ENCODE measurements at regions of chr20 and their contacts with region 1.

Region 1: DNA sequence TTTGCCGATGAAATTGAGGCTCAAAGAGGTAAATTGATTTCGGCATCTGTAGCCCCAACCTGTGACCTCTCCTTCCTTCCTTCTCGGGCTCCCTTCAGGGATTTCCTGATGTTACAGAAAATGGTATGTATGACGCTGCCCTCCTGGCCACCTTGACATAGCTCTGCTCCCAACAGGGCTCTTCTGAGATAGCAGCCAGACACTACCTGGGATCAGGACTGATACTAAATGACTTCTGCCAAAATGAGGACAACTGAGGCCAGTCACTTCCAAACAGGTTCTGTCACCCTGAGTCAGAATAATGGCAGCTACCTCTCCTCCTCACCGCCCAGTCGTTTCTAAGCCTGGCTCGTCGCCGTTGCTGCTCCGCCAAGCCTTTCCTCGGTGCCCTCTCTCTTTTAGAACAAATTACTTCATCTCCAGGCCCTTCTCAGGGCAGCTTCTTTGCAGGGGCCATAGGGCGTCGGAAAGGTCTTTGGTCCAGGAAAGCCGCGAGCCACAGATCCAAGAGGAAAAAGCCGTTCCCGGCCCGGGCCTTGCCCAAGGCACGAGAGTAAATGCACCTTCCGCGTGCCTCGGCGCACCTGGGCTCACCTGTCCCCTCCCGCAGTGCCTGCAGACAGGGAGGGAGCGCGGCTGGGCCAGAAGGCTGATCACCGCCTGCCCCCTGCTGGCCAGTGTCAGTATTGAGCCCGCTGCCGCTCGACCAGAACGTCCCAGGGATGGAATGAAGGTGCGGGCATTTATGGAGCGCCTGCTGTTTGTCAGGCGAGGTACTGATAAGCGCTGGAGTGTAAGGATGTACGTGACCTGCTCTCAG is 904 bp upstream of the LPIN3 start:
- DNase-seq: peak; percentile 77
- ATAC-seq: peak; percentile 79 to 88
- H3K4me3 ChIP-seq: peak overlapping the region; percentile 66
- H3K27ac ChIP-seq: peak overlapping the region; percentile 45 to 94; a peak in 5 of 6 replicates
- H3K4me1 ChIP-seq: peaks cover 11% of the 10 kb centered on the region; the same call in 2 of the 3 replicates
- CTCF ChIP-seq: peak; percentile 95
- EP300 ChIP-seq: no peak
- POLR2A ChIP-seq: no peak
- RAD21 ChIP-seq: peak; percentile 97 to 99

Region 2: DNA sequence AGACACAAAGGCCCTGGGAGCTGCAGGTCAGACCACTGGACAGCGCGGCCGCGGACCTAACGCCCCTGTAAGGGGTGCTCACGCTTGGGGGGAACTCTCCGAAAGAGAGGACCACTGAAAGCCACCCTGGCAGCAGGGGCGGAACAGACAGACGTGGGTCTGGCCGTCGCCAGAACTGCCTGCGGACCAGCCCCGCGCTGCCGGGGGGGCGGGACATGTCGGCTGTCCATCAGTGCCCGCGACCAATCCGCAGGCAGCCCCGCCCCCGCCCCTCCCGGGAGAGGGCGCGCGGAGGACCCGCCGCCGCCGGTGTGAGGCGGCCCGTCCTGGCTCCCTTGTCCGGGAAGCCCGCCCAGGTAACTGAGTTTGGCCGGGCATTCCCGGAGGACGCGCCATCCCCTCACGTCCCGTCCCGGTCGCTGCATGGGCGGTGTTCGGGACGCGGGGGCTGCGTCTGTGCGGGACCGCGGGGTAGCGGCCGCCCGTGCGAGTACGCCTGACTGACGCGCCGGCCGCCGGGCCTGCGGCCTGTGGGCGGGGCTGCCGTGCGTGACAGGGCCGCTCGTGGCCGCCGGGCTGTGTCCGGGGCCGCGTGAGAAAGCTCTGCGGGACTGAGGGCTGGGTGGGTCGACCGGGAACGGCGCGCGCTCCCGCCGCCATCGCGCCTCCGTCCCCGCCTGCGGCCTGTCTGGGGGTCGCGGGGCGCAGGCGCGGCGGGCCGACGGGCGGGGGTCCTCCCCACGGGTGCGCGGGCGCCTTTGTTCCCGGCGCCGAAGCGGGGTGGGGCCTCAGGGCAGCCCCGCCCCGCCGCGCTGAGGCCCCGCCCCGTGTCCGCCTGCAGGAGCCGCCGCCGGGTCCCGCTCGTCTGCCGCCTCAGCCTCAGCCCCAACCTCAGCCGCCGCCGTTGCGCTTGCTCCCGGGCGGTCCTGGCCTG is 202.8 kb before region 1 on chr20 and contains the start of gene PLCG1:
- CTCF ChIA-PET with region 1: interaction called, 103 read pairs
- POLR2A ChIA-PET with region 1: no interaction called
- DNase-seq: peak; percentile 83 to 91
- ATAC-seq: peak; percentile 77 to 86
- H3K4me3 ChIP-seq: peak within 1 kb of the TSS; percentile 89
- H3K27ac ChIP-seq: peak within 1 kb of the TSS; percentile 86 to 91
- H3K4me1 ChIP-seq: peaks cover 7% of the 10 kb centered on the region
- CTCF ChIP-seq: no peak
- EP300 ChIP-seq: no peak
- POLR2A ChIP-seq: peak; percentile 57
- RAD21 ChIP-seq: no peak
- polyA plus RNA-seq, gene PLCG1: 22.0 and 37.1 TPM in 2 replicates

Region 3: GRCh38 chr20:41185013-41185757 is 154.5 kb before region 1 on chr20:
- CTCF ChIA-PET with region 1: interaction called, 10 read pairs
- POLR2A ChIA-PET with region 1: no interaction called
- DNase-seq: no peak
- ATAC-seq: no peak; a peak in 1 of 6 replicates
- H3K4me3 ChIP-seq: no peak overlapping the region
- H3K27ac ChIP-seq: no peak overlapping the region
- H3K4me1 ChIP-seq: no peaks in the 10 kb centered on the region
- CTCF ChIP-seq: no peak
- EP300 ChIP-seq: no peak
- POLR2A ChIP-seq: no peak
- RAD21 ChIP-seq: no peak

Region 4: DNA sequence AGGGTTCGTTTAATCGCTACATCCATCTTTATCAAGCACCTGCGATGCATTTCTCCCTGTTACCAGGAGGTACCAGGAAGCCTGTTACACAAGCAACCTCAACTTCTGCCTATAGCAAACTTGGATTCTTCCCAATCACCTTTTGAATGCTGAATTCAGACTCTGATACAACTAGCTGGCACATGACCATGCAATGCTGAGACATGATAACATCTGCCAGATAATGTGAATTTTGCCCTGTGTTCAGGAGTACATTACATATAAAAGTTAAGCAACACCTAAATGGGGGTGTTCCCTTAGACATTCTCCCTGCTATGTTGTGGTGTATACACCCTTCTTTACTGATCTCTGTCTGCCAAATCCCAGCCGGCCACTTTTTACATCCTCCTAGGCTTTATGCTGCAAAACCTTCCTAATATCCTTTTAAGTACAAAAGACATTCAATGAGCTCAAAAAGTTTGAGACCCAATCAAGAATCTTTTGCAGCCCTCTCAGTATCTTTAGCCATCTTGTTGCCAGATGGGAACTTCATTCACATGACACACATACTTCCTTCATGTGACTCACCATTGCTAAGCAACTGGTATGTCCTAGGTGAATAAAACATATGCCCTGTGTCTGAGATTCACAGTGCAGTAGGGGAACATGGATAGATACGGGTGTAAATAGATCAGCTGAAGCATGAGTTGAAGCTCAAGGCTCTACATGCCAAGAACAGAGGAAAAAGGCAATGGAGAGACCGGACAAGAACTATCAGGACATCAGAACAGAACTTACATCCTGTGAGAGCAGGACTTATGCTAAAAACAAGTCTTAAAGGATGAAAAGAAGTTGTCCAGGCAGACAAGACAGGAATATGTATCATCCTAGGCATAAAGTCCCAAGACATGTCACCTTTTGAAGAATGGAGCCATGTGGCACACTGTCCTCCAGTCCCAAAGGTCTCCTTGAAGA is 106.5 kb before region 1 on chr20:
- CTCF ChIA-PET with region 1: interaction called, 28 read pairs
- POLR2A ChIA-PET with region 1: no interaction called
- DNase-seq: peak; percentile 10 to 31
- ATAC-seq: peak; percentile 71 to 86; a peak in 5 of 6 replicates
- H3K4me3 ChIP-seq: peak overlapping the region; percentile 42
- H3K27ac ChIP-seq: peak overlapping the region; percentile 56 to 64; a peak in 3 of 6 replicates
- H3K4me1 ChIP-seq: peaks cover 12% of the 10 kb centered on the region
- CTCF ChIP-seq: no peak
- EP300 ChIP-seq: no peak
- POLR2A ChIP-seq: no peak
- RAD21 ChIP-seq: no peak

Region 5: DNA sequence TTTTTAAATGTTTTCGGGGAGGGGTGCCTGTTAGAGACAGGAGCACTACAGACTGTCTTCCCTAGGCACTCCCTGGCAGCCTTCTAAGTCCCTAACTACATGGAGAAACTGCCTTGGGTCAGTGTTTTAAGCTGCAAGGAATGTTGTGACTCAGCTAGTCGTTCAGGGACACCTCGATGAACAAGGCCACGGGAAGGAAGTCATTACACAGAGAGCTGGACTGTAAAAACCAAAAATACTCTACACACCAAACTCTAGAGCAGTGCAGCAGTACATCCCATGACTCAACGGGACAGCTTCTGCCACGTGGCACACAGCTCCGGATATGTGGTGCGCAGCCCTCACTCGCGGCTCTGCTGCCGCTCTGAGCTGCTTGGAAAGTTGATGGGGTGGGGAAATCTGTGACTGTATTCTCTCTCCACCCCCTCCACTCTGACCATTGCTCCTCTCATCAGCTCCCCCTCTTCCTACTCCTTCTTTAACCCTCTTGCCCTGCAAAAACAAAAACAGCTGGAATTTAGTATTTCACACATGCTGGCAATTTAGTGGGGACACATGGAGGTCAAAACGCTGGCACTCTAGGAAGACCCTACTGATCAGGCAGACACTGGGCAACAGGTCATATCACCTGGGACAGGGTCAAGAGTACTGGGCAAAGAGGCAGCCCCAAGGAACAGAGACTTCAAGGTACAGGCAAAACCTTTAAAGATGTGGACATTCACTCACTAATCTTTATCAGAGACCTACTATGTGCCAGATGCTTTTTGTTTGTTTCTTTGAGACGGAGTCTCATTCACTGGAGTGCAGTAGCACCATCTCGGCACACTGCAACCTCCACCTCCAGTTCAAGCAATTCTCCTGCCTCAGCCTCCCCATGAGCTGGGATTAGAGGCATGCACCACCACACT is 10.0 kb before region 1 on chr20:
- CTCF ChIA-PET with region 1: interaction called, 34 read pairs
- POLR2A ChIA-PET with region 1: interaction called, 12 read pairs
- DNase-seq: peak; percentile 44 to 65
- ATAC-seq: peak; percentile 93
- H3K4me3 ChIP-seq: no peak overlapping the region
- H3K27ac ChIP-seq: peak overlapping the region; percentile 63 to 82
- H3K4me1 ChIP-seq: peaks cover 15% of the 10 kb centered on the region
- CTCF ChIP-seq: no peak
- EP300 ChIP-seq: no peak
- POLR2A ChIP-seq: no peak
- RAD21 ChIP-seq: no peak

Region 6: GRCh38 chr20:41357424-41358163 is 17.9 kb after region 1 on chr20:
- CTCF ChIA-PET with region 1: interaction called, 28 read pairs
- POLR2A ChIA-PET with region 1: no interaction called
- DNase-seq: no peak
- ATAC-seq: peak in 1 of 2 experiments; percentile 32; a peak in 2 of 6 replicates
- H3K4me3 ChIP-seq: no peak overlapping the region
- H3K27ac ChIP-seq: no peak overlapping the region
- H3K4me1 ChIP-seq: no peaks in the 10 kb centered on the region
- CTCF ChIP-seq: no peak
- EP300 ChIP-seq: no peak
- POLR2A ChIP-seq: no peak
- RAD21 ChIP-seq: no peak

Region 7: DNA sequence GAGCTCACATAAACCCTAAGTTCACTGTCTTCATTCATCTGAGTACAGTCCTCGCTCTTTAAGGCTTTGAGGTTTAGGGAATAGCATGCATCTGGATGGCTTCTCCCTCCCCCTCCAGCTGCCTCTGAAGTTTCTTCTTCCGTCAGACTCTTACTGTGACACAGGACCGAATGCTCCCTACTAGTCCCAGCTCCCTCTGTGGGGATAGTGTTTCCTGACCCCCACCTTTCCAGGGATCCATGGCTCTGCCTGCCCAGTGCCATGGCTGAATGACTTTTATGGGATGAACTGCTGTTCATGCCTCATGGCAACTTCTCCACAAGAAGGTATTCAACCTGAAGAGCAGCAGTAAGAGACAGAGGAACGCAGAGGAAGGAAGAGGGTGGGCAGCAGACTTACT is 106.7 kb after region 1 on chr20:
- CTCF ChIA-PET with region 1: no interaction called
- POLR2A ChIA-PET with region 1: no interaction called
- DNase-seq: no peak
- ATAC-seq: no peak
- H3K4me3 ChIP-seq: no peak overlapping the region
- H3K27ac ChIP-seq: no peak overlapping the region
- H3K4me1 ChIP-seq: no peaks in the 10 kb centered on the region
- CTCF ChIP-seq: no peak
- EP300 ChIP-seq: no peak
- POLR2A ChIP-seq: no peak
- RAD21 ChIP-seq: no peak